Activated naive CD4-positive, alpha-beta T cell treated with anti-CD3 and anti-CD28 coated beads for 36 hours (primary cell): ENCODE measurements at regions of chr12 and their contacts with region 1.

Region 1: GRCh38 chr12:114440270-114441038 is 34.5 kb upstream of the TBX5 start:
- DNase-seq: no peak
- H3K4me3 Mint-ChIP-seq: no peak overlapping the region
- H3K27ac Mint-ChIP-seq: no peak overlapping the region
- H3K4me1 Mint-ChIP-seq: no peaks in the 10 kb centered on the region
- H3K27me3 Mint-ChIP-seq: peaks cover 76% of the 10 kb centered on the region

Region 2: DNA sequence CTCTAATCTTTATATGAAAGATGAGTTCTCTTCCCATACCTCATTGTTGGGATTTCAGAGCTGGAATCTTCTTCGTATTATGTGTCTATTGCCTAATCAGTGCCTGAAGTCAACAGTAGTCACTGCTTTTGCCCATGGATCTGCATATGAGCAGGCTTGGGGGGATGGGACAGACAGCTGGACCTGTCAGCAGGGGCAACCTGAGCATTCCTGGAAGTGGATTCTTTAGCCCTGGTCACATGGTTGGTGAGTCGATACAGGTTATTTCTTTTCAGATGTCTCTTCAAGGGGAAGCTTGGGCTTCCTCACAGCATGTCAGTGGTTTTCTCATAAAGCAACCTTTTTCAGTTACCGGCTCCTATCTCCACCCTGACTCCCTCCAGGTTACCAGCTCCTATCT is 377.0 kb before region 1 on chr12:
- CTCF ChIA-PET with region 1: no interaction called
- intact Hi-C with region 1: no loop called
- DNase-seq: no peak
- H3K4me3 Mint-ChIP-seq: no peak overlapping the region
- H3K27ac Mint-ChIP-seq: no peak overlapping the region
- H3K4me1 Mint-ChIP-seq: no peaks in the 10 kb centered on the region
- H3K27me3 Mint-ChIP-seq: no peaks in the 10 kb centered on the region

Region 3: GRCh38 chr12:114408886-114409851 is 31.3 kb before region 1 on chr12:
- CTCF ChIA-PET with region 1: no interaction called
- intact Hi-C with region 1: loop called (anchors 2 kb)
- DNase-seq: no peak
- H3K4me3 Mint-ChIP-seq: peak overlapping the region; percentile 36
- H3K27ac Mint-ChIP-seq: no peak overlapping the region
- H3K4me1 Mint-ChIP-seq: peaks cover 14% of the 10 kb centered on the region
- H3K27me3 Mint-ChIP-seq: peaks cover 81% of the 10 kb centered on the region